Ascending aorta (tissue), 2 donors: ENCODE measurements at regions of chr12 and their contacts with region 1.

Region 1: DNA sequence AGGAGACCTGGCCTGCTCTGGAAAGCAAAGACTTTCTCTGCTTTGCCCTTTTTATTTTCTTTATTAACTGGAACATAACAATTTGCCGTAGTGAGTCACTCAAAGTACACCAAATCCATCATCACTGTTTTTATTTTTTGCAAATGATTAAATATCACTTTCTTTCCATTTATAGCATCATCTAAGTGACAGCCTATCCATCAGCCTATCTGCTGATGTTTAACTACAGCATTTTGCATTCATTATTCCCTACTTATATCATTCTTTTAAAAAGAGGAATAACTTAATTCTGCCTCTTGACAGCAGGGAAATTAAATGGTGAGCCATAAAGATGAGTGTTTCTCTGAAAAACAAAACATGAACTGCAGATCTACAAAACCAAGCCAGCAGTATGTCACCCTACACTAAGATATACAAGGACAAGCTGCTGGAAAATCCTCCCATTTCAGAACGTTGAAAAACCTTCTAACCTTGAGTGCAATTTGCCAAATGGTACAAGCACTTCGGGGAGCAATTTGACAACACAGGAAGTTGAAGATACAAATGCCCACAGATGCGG is 821.3 kb upstream of the TMEM132C start:
- DNase-seq: no peak
- H3K4me3 ChIP-seq: no peak overlapping the region
- H3K27ac ChIP-seq: peak overlapping the region; percentile 25 to 45
- H3K4me1 ChIP-seq: peaks cover 0 to 28% of the 10 kb centered on the region in 2 donors
- H3K27me3 ChIP-seq: no peaks in the 10 kb centered on the region
- CTCF ChIP-seq: no peak

Region 2: GRCh38 chr12:127582074-127582473 is 136.4 kb after region 1 on chr12:
- intact Hi-C with region 1: loop called (anchors 5 kb)
- DNase-seq: no peak
- H3K4me3 ChIP-seq: no peak overlapping the region
- H3K27ac ChIP-seq: no peak overlapping the region
- H3K4me1 ChIP-seq: no peaks in the 10 kb centered on the region
- H3K27me3 ChIP-seq: no peaks in the 10 kb centered on the region
- CTCF ChIP-seq: no peak